Psoas muscle (tissue), 8 donors: ENCODE measurements at regions of chr1 and their contacts with region 1.

Region 1: GRCh38 chr1:150621497-150622302 is 7.7 kb downstream of the ENSA start:
- DNase-seq: peak; percentile 28 to 59
- ATAC-seq: peak in 3 of 4 donors; percentile 28 to 49 (median 46)
- H3K4me3 ChIP-seq: peak overlapping the region; percentile 7
- H3K27ac ChIP-seq: peak overlapping the region; percentile 71
- H3K4me1 ChIP-seq: peaks cover 41% of the 10 kb centered on the region
- H3K27me3 ChIP-seq: no peaks in the 10 kb centered on the region
- CTCF ChIP-seq: peak; percentile 67

Region 2: DNA sequence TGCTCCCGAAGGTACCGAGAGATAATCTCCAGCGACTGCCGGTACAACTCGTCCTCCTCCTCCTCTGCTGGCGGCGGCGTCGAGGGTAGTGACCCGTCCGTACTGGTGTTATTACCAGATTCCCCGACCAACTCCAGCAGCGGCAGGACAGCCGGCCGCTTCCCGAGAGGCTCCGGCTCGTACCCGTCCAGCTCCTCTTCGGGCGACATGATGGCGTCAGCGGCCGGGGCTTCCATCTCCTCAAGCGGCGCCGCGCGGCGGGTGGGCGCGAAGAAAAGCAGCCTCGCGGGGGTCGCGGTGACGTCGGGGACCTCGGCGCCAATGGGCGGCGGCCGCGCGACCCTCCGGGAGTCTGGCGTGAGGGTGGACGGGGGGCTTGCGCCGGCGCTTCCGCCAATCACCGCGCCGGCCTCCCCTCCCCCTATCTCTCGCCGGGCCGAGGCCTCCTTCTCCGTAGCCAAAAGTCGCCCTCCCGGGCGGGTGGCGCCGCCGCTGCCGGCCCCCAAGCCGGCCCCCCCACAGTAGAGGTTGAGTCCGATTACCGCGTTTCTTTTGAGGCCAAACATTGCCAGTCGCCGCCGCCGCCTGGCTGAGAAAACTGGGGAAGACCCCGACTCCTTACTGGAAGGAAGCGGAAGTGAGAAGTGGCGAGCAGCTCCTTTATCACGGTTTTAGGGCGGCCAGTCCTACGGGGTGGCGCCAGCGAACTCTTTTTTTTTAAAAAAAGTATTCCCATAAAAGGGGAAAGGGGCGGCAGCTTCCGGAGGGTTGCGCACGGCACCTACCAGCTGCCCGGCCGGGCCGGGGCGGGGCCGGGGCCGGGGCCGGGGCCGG is 42.5 kb before region 1 on chr1 and contains the start of gene MCL1:
- intact Hi-C with region 1: loop called (anchors 5 kb)
- DNase-seq: peak; percentile 92 to 97
- ATAC-seq: peak; percentile 77 to 84 (median 81)
- H3K4me3 ChIP-seq: peak within 1 kb of the TSS; percentile 92
- H3K27ac ChIP-seq: peak within 1 kb of the TSS; percentile 100
- H3K4me1 ChIP-seq: peaks cover 20% of the 10 kb centered on the region
- H3K27me3 ChIP-seq: no peaks in the 10 kb centered on the region
- CTCF ChIP-seq: no peak
- total RNA-seq, gene MCL1: 101 to 192 (median 129) TPM